GM12878 (cell line): ENCODE measurements at regions of chr18 and their contacts with region 1.

Region 1: GRCh38 chr18:4068552-4069158 is 386.5 kb downstream of the DLGAP1 start:
- DNase-seq: peak; percentile 25
- ATAC-seq: peak; percentile 84
- H3K4me3 ChIP-seq: no peak overlapping the region
- H3K27ac ChIP-seq: no peak overlapping the region
- H3K4me1 ChIP-seq: no peaks in the 10 kb centered on the region
- H3K27me3 ChIP-seq: no peaks in the 10 kb centered on the region
- CTCF ChIP-seq: peak; percentile 54 to 72 (median 69)
- EP300 ChIP-seq: no peak
- POLR2A ChIP-seq: no peak
- RAD21 ChIP-seq: peak; percentile 41

Region 2: GRCh38 chr18:4017480-4017879 is 51.2 kb before region 1 on chr18:
- CTCF ChIA-PET with region 1: interaction called, 4 read pairs
- POLR2A ChIA-PET with region 1: no interaction called
- RAD21 ChIA-PET with region 1: no interaction called
- SMC1A ChIA-PET with region 1: no interaction called
- in situ Hi-C with region 1: no loop called
- intact Hi-C with region 1: loop called (anchors 10 kb)
- DNase-seq: no peak
- ATAC-seq: peak; percentile 79
- H3K4me3 ChIP-seq: no peak overlapping the region
- H3K27ac ChIP-seq: no peak overlapping the region
- H3K4me1 ChIP-seq: no peaks in the 10 kb centered on the region
- H3K27me3 ChIP-seq: no peaks in the 10 kb centered on the region
- CTCF ChIP-seq: peak in 2 of 3 experiments; percentile 22 to 35; a peak in 3 of 6 replicates
- EP300 ChIP-seq: no peak
- POLR2A ChIP-seq: no peak
- RAD21 ChIP-seq: no peak